Posterior vena cava (tissue), 2 donors: ENCODE measurements at regions of chr2 and their contacts with region 1.

Region 1: DNA sequence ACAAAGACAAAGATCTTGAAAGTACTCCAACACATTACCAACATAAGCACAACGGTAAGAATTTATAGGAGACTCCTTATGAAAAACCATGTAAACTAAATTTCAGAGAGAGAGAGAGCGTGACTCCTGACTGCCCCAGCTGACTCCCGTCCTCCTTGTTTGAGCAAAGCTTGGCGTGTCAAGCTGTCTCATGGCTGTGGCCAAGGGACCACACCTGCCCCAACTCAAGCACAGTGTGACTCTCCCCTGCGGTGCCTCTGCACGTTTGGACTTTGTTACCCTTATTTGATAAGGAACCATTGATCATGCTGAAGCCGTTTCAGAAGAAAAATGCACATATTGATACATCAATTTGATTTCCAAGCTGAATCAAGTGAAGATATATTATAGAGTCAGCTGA is 124.8 kb downstream of the COL6A3 start:
- DNase-seq: no peak

Region 2: GRCh38 chr2:237322564-237322963 is 33.4 kb after region 1 on chr2:
- intact Hi-C with region 1: loop called in 1 of 2 experiments (anchors 5 kb)
- DNase-seq: no peak